Body of pancreas (tissue), 4 donors: ENCODE measurements at regions of chr12 and their contacts with region 1.

Region 1: GRCh38 chr12:92551853-92552397 is 150.9 kb upstream of the PLEKHG7 start:
- DNase-seq: no peak
- ATAC-seq: peak; percentile 43
- H3K4me3 ChIP-seq: no peak overlapping the region
- H3K27ac ChIP-seq: peak overlapping the region; percentile 18 to 82 (median 74)
- H3K4me1 ChIP-seq: peaks cover 72% of the 10 kb centered on the region
- H3K27me3 ChIP-seq: no peaks in the 10 kb centered on the region
- CTCF ChIP-seq: no peak
- POLR2A ChIP-seq: no peak

Region 2: DNA sequence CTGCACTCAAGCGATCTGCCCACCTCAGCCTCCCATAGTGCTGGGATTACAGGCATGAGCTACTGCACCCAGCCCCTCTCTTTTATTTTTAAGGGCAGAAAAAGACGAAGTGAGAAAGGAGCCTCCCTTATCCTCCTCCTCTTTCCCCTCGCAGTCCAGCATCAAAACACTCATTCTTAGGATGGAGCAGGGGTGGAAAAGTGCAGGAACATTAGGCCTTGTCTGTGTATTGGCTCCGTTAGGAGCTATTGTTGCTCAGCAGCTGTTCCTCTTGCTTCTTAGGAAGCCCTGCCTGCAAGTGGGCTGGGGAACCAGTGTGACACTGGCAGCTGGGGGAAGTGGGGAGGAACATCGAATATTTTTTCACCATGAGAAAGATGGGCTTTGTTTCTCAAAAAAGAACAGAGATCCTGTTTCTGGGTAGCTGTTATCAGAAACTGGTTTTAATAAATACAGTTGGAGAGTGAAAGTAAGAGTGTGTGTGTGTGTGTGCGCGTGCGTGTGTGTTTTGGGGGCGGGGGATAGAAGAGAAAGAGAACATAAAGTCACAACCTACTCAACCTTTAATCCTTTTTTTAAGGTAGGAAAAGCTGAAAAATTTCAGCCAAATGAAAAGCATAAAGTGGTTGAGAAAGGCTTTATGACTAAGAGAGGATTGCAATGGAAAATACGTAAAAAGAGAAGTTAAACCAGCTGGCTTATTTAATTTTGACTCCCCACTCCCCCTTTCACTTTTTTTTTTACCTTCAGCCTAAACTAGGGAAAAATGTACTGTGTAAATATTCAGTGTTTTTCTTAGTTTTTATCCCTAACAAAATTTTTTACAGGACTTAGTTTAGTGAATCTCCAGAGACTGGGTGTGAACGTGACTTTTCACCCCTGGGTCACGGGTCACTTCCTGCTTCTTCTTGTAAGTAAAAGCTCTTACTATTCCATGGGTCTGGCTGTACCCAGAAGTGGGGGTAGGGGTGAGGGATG is 46.4 kb before region 1 on chr12:
- intact Hi-C with region 1: loop called (anchors 10 kb)
- DNase-seq: peak; percentile 40 to 62 (median 59)
- ATAC-seq: peak; percentile 40
- H3K4me3 ChIP-seq: no peak overlapping the region
- H3K27ac ChIP-seq: peak overlapping the region; percentile 68 to 93 (median 88)
- H3K4me1 ChIP-seq: peaks cover 57% of the 10 kb centered on the region
- H3K27me3 ChIP-seq: no peaks in the 10 kb centered on the region
- CTCF ChIP-seq: no peak
- POLR2A ChIP-seq: no peak

Region 3: GRCh38 chr12:92717202-92717601 is 165.3 kb after region 1 on chr12:
- intact Hi-C with region 1: no loop called
- DNase-seq: no peak
- ATAC-seq: no peak
- H3K4me3 ChIP-seq: no peak overlapping the region
- H3K27ac ChIP-seq: no peak overlapping the region
- H3K4me1 ChIP-seq: no peaks in the 10 kb centered on the region
- H3K27me3 ChIP-seq: no peaks in the 10 kb centered on the region
- CTCF ChIP-seq: no peak
- POLR2A ChIP-seq: no peak